ENCODE measurements at regions of chr11 and their contacts with region 1.

Region 1: GRCh38 chr11:12122083-12122482 is 11.7 kb downstream of the MICAL2 start:
- DNase-seq: peak; percentile 52
- H3K4me3 Mint-ChIP-seq: no peak overlapping the region
- H3K27ac Mint-ChIP-seq: no peak overlapping the region
- H3K4me1 Mint-ChIP-seq: peaks cover 54% of the 10 kb centered on the region
- H3K27me3 Mint-ChIP-seq: no peaks in the 10 kb centered on the region
- CTCF ChIP-seq: peak; percentile 34

Region 2: DNA sequence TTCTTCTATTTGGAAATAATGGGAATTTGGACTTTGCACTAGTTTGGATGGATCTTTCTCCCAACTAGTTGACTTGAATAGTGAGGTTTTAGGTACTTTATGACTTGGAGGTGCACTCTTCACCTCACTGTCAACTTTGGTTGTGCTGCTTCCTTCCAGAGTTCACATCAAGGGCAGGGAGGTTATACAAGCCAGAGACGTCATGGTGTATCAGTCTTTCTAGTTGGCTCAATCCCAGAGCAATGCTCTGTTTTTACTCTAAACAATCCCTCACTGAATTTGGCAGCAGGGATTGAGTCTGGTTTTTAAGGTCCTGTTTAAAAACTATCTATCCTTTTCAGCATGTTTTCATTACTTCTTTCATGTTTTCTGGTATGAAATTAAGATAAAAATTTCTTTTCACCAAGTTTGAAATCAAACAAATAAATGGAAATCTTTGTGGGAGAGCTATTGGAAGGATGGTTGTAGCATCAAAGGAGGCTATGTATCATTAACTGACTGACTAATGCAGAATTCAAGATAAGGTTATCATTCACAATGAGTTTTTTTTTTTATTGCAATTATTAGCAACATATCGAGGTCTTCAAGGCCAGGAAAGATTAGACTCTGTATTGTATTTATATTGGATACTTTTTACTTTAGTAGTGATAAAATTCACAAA is 1236.2 kb before region 1 on chr11:
- CTCF ChIA-PET with region 1: no interaction called
- POLR2A ChIA-PET with region 1: no interaction called
- intact Hi-C with region 1: no loop called
- DNase-seq: no peak
- H3K4me3 Mint-ChIP-seq: no peak overlapping the region
- H3K27ac Mint-ChIP-seq: no peak overlapping the region
- H3K4me1 Mint-ChIP-seq: no peaks in the 10 kb centered on the region
- H3K27me3 Mint-ChIP-seq: no peaks in the 10 kb centered on the region
- CTCF ChIP-seq: no peak

Region 3: GRCh38 chr11:12066799-12067508 is 55.1 kb before region 1 on chr11:
- CTCF ChIA-PET with region 1: interaction called, 3 read pairs
- POLR2A ChIA-PET with region 1: interaction called, 46 read pairs
- intact Hi-C with region 1: no loop called
- DNase-seq: peak; percentile 82
- H3K4me3 Mint-ChIP-seq: peak overlapping the region; percentile 49
- H3K27ac Mint-ChIP-seq: peak overlapping the region; percentile 95
- H3K4me1 Mint-ChIP-seq: peaks cover 53% of the 10 kb centered on the region
- H3K27me3 Mint-ChIP-seq: no peaks in the 10 kb centered on the region
- CTCF ChIP-seq: no peak

Region 4: DNA sequence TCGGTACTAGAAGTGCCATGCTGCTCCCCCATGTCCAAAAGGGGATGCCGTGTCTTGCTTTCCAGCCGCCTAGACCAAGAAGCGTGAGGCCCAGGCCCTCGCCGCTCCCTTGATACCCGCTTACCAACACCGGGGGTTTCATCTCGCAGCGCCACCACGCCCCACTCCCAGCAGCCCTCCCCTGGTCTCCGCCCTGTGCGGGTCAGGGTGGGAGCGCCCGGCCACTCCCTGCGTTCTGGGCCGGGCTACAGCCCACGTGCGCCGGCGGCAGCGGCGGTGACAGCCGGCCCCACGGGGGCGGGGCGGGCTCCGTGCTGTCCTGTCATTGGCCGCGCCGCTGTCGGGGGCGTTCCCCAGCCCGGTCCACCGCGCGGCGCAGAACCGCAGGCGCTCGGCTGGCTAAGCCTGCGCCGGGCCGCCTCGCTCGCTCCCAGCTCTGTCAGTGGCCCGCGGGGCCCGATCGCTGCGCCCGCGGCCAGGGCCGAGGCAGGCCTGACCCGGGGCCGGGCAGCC is 11.8 kb before region 1 on chr11 and contains the start of gene MICAL2:
- CTCF ChIA-PET with region 1: interaction called, 4 read pairs
- POLR2A ChIA-PET with region 1: interaction called, 79 read pairs
- intact Hi-C with region 1: no loop called
- DNase-seq: peak; percentile 88
- H3K4me3 Mint-ChIP-seq: peak within 1 kb of the TSS; percentile 79
- H3K27ac Mint-ChIP-seq: peak within 1 kb of the TSS; percentile 61
- H3K4me1 Mint-ChIP-seq: peaks cover 29% of the 10 kb centered on the region
- H3K27me3 Mint-ChIP-seq: no peaks in the 10 kb centered on the region
- CTCF ChIP-seq: no peak
- total RNA-seq, gene MICAL2: 151 and 154 TPM in 2 replicates

Region 5: DNA sequence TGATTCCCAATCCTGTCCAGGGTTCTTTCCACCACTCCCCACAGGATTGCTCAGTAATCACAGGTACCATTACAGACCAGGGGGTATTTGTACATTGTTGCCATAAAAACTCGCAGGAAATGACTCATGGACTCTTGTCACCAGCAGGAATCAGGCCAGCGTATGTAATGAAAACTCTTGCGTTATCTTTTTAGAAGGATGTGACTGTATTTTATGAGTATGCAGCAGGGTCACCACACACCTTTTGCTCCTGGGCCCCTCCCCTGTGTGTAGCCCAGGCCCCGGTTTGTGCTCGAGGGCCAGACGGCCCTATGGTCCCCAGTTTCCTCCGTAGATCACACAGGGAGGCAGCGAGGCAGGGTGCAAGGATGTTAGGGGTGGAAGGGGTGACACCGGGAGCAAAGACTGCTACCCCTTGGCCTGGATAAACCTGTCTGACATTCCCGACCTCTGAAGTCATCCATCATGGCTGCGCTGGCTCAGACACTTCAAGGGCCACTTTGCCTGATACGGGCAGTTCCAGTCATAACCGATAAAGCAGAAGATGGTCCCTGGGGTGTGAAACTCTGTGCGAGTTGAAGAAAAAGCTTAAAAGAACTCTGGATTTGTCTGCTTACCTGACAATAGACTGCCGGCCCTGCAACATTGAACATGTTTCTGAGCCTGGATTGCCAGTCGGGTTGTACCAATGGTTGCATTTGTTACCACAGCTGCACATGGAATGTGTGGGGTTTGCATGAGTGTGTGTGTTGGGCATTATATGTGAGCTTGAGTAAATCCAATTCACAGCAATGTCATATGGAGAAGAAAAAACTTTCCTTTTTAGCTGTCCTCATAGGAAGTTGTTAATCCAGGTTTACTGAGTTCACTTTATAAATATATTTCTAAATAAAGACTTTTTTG is 45.3 kb after region 1 on chr11:
- CTCF ChIA-PET with region 1: interaction called, 3 read pairs
- POLR2A ChIA-PET with region 1: interaction called, 11 read pairs
- intact Hi-C with region 1: loop called (anchors 5 kb)
- DNase-seq: peak; percentile 93
- H3K4me3 Mint-ChIP-seq: no peak overlapping the region
- H3K27ac Mint-ChIP-seq: peak overlapping the region; percentile 8
- H3K4me1 Mint-ChIP-seq: peaks cover 49% of the 10 kb centered on the region
- H3K27me3 Mint-ChIP-seq: no peaks in the 10 kb centered on the region
- CTCF ChIP-seq: no peak

Region 6: DNA sequence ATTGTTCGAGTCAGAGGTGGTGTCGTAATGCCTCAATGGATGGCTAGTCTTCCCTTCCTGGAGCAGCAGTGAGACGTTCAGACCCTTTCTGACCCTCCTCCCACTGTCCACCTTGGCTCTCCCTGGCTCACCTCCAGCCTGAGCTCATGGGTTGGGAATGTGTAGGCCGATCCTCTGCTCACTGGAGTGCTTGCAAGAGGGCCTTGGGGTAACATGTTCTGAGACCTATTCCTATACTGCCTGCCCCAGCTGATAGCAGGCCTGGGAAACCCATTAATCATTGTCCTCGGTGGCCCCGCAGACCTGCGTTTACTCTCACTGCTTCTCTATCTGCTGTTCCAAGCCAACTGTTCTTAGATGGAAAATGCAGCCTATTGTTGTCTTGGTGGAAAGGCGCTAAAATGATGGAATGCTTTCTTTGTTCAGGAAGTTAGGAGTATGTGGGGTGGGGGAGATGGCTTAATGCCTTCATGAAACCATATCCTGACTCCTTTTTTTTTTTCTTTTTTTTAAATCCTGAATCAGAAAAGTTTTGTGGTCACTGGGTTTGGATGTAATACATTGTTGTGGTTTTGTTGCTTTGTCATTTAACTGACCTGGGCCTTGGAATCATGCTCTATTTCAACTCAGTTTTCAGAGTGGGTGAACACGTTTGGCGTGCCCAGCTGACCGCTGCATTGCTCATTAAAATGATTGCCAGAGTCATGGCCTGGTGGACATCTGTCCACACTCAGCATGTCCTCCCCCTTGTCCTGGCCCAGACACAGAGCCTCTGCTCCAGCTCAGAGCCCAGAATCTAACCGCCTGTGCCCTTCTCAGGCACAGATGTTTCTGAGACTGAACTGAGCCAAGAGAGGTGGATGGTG is 60.8 kb after region 1 on chr11:
- CTCF ChIA-PET with region 1: interaction called, 3 read pairs
- POLR2A ChIA-PET with region 1: interaction called, 19 read pairs
- intact Hi-C with region 1: loop called (anchors 5 kb)
- DNase-seq: peak; percentile 97
- H3K4me3 Mint-ChIP-seq: no peak overlapping the region
- H3K27ac Mint-ChIP-seq: peak overlapping the region; percentile 82
- H3K4me1 Mint-ChIP-seq: peaks cover 46% of the 10 kb centered on the region
- H3K27me3 Mint-ChIP-seq: no peaks in the 10 kb centered on the region
- CTCF ChIP-seq: no peak